ENCODE measurements at regions of chr7 and their contacts with region 1.

Region 1: DNA sequence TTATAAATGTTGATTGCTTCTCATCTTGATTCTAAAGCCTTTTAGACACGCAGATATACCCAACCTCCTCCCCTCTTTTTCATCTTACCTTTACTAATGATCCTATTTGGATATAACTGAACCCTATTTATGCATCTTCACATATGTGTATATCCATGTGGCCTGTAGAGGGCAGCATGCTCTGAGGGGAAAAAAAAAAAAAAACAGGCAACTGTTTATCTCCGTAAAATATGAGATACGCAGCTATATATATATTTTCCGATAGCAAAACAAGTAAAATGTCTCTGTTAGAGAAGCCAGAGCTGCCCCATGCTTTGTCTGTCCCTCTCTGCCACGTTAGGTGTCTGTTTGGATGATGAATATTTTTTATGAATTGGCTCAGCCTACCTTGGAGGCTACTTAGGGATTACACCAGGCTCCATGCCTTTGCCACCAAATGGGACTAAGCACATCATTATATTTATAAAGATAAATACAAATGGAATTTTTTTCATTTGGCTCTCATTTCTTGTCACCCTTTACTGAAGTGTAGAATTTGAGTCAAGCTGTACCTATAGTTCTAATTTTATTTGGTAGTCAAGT is 174.8 kb upstream of the FZD1 start:
- DNase-seq: no peak
- ATAC-seq: peak; percentile 28 to 73 (median 64)
- H3K4me3 ChIP-seq: peak overlapping the region in 7 of 10 donors; percentile 6 to 44 (median 36)
- H3K27ac ChIP-seq: peak overlapping the region in 4 of 10 donors; percentile 29 to 62 (median 40)
- H3K4me1 ChIP-seq: peaks cover 0 to 21% (median 9%) of the 10 kb centered on the region in 9 donors
- H3K27me3 ChIP-seq: no peaks in the 10 kb centered on the region
- CTCF ChIP-seq: peak; percentile 63 to 89 (median 82)

Region 2: DNA sequence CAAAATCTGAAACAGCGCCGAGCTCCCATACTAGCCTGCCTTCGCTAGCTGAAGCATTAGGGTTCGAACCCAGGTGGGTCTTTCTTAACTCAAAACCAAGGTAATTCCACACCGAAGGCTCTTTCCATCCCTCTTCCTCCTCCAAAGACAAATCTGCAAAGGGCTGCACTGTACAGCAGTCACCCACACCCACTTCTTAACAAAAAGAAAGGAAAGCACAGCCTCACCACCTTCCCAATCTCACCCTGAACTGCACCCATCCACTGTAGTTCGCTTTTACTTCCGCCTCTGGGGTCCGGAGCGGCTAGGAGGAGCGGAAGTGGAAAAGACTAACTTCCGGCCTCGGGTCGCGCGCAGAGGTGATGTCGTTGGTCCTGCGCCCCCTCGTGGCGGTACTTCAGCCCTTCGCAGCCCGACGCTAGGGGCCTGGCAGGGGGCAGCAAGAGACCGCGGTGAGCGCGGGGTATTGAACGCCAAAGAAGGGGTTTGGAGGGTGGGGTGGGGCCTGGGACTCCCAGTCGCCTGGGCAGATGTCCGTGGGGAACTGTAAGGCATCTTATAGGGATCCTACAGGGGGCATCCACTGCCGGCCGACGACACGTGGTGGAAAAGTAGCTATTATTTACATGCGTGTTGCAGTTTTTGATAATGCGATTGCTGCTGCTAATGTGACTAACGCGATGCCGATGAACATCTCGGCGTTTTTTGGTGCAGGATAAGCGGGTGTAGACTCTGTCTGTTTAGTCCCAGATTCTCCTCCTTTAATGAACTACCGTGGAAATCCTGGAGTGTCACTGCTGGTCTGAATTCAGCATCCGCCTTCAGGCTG is 791.2 kb after region 1 on chr7 and contains the start of gene MTERF1:
- intact Hi-C with region 1: loop called in 6 of 10 experiments (anchors 5 to 10 kb)
- DNase-seq: peak; percentile 93
- ATAC-seq: peak; percentile 97 to 100 (median 99)
- H3K4me3 ChIP-seq: peak within 1 kb of the TSS; percentile 59 to 91 (median 80)
- H3K27ac ChIP-seq: peak within 1 kb of the TSS in 9 of 10 donors; percentile 8 to 84 (median 46)
- H3K4me1 ChIP-seq: peaks cover 0 to 29% (median 23%) of the 10 kb centered on the region in 9 donors
- H3K27me3 ChIP-seq: no peaks in the 10 kb centered on the region
- CTCF ChIP-seq: peak; percentile 89 to 100 (median 95)
- total RNA-seq, gene MTERF1: 5.9 to 9.9 (median 7.1) TPM

Measured in heart right ventricle (tissue), 16 donors.